ENCODE measurements at regions of chr9 and their contacts with region 1.

Region 1: DNA sequence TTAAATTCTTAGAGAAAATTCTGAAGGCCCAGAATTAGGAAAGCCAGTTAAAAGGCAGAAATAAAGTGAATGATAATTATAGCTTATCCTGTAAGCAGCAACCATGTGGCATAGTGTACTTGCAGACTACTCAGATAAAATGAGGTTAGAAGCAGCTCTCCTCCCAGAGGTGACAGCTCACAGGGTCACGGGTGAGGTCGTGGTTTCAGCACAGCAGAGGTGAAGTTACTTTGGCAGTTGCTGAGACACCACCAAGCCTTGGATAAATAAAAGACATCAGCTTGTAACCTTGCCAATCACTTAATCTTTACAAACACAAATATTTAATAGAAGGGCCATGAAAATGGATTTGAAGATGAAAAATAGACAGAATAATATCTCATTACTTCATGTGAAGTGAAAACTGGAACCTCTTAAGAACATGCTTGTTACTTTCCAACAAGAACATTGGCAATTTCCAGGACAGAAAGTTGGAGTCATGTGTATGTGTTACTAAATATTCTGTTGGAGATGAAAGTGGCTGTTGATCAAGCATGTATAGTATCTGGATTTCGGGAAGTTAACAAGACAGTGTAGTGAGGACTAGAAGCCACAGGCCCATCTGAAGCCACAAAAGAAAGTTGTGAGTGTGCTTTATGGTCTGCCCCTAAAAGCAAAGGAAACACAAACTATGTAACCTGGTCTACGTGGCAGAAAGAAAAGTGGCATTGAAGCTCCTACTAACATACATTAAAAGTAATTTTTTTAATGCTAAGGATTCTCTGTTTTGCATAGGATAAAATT is 134.4 kb downstream of the ERCC6L2 start:
- DNase-seq: peak; percentile 83
- H3K4me3 Mint-ChIP-seq: no peak overlapping the region
- H3K27ac Mint-ChIP-seq: peak overlapping the region; percentile 73
- H3K4me1 Mint-ChIP-seq: peaks cover 54% of the 10 kb centered on the region
- H3K27me3 Mint-ChIP-seq: no peaks in the 10 kb centered on the region

Region 2: GRCh38 chr9:95953986-95954385 is 55.9 kb before region 1 on chr9:
- CTCF ChIA-PET with region 1: no interaction called
- intact Hi-C with region 1: loop called (anchors 2 kb)
- DNase-seq: no peak
- H3K4me3 Mint-ChIP-seq: no peak overlapping the region
- H3K27ac Mint-ChIP-seq: peak overlapping the region; percentile 64
- H3K4me1 Mint-ChIP-seq: peaks cover 18% of the 10 kb centered on the region
- H3K27me3 Mint-ChIP-seq: no peaks in the 10 kb centered on the region

Region 3: DNA sequence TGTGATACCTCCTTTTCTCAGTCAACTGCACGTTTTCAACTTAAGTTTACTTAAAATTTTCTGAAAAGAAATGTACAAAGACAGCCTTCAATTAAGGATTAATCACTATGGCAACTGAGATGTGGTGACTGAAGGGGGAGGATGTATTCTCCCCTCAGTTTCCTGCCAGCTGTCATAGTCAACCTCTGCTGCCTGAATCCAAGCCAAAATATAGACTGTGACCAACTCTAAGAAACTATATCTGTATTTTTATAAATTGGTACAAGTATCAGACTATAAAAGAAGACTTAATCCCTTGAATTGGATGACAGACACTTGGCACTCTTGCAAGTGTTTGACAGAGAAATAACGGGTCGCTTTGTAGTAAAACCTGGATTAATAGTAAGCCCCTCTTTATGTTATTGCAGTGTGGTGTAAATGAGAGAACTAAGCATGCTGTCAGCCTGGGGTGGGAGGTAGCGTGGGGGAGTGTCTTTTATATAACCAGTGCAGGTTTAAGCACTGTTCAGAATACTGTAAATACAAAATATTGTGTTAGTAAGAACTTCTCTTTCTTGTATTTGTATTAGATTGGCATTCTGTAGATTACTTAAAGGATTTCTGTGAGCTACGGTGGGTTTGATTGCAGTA is 28.0 kb before region 1 on chr9:
- CTCF ChIA-PET with region 1: interaction called, 5 read pairs
- intact Hi-C with region 1: loop called (anchors 2 kb)
- DNase-seq: peak; percentile 30
- H3K4me3 Mint-ChIP-seq: no peak overlapping the region
- H3K27ac Mint-ChIP-seq: no peak overlapping the region
- H3K4me1 Mint-ChIP-seq: peaks cover 21% of the 10 kb centered on the region
- H3K27me3 Mint-ChIP-seq: no peaks in the 10 kb centered on the region

Measured in activated naive CD4-positive, alpha-beta T cell treated with anti-CD3 and anti-CD28 coated beads for 36 hours (primary cell).